Dorsolateral prefrontal cortex (tissue), 120 donors: ENCODE measurements at regions of chr12 and their contacts with region 1.

Region 1: DNA sequence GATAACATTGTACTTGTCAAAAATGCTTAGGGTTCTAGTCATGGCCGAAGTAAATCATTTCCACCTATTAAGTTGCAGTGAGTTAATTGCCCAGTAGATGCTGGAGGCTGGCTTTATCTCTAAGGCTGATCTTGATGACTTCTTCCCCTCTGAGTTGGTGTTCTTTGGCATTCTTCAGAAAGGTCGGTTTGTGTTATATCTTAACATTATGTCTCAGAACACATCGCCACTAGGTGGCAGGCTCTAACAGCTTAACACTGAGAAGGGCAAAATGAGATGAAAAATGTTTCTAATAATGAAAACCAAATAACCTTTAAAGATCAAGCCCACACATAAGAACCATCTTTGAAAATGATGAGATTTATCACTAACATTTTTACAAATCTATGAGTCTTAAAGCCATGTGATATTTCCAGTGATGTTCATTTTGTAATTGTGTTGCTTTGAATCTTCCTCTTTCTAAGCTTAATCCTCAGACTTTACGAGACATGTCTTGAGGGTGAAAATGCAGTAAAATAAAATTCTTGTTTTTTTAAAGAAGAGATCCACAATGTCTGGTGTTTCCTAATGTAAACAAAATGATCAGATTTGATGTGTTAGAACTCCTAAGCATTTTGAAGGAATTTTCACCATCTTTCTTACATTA is 28.6 kb downstream of the SUDS3 start:
- DNase-seq: peak in 6 of 10 donors; percentile 49 to 85 (median 64)
- H3K4me3 ChIP-seq: no peak overlapping the region
- H3K27ac ChIP-seq: peak overlapping the region in 27 of 59 donors; percentile 4 to 73 (median 35)
- H3K27me3 ChIP-seq: no peaks in the 10 kb centered on the region
- CTCF ChIP-seq: peak; percentile 63 to 93 (median 83)

Region 2: GRCh38 chr12:118446244-118446643 is 41.2 kb after region 1 on chr12:
- intact Hi-C with region 1: no loop called
- DNase-seq: no peak
- H3K4me3 ChIP-seq: no peak overlapping the region
- H3K27ac ChIP-seq: no peak overlapping the region
- H3K27me3 ChIP-seq: no peaks in the 10 kb centered on the region
- CTCF ChIP-seq: peak in 5 of 56 donors; percentile 10 to 28 (median 21)

Region 3: DNA sequence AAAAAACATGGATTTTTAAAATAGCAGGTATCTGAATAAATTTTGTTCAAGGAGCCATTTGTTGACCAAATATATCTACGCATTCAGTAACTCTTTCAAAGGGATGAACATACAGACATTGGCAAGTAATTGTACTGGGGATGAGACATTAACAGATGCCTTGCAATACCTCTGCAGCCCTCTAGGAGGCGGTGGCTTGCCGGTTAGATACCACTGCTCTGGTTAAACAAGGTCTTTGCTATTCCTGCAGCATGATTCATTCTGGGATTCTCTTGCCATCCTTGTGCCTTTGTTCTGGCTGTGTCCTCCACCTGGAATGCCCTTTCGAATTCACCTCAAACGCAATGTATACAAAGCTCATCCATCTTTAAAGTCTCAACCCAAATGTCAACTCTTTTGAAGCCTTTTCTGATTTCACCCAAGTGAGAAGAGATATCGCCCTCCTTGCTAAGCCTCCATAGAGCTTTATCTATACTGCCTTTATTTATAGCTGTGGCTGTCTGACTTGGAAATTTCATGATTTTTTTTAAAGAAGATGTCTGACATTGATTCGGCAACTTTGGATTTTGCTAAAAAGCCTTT is 445.3 kb after region 1 on chr12:
- intact Hi-C with region 1: loop called (anchors 10 kb)
- DNase-seq: no peak
- H3K4me3 ChIP-seq: no peak overlapping the region
- H3K27ac ChIP-seq: no peak overlapping the region
- H3K27me3 ChIP-seq: no peaks in the 10 kb centered on the region
- CTCF ChIP-seq: peak in 35 of 56 donors; percentile 5 to 42 (median 25)

Region 4: GRCh38 chr12:119036878-119037825 is 632.2 kb after region 1 on chr12:
- intact Hi-C with region 1: loop called in 1 of 2 experiments (anchors 5 kb)
- DNase-seq: peak in 2 of 10 donors; percentile 34 to 43
- H3K4me3 ChIP-seq: no peak overlapping the region
- H3K27ac ChIP-seq: peak overlapping the region in 27 of 59 donors; percentile 0 to 60 (median 31)
- H3K27me3 ChIP-seq: no peaks in the 10 kb centered on the region
- CTCF ChIP-seq: peak; percentile 41 to 75 (median 62)

Region 5: DNA sequence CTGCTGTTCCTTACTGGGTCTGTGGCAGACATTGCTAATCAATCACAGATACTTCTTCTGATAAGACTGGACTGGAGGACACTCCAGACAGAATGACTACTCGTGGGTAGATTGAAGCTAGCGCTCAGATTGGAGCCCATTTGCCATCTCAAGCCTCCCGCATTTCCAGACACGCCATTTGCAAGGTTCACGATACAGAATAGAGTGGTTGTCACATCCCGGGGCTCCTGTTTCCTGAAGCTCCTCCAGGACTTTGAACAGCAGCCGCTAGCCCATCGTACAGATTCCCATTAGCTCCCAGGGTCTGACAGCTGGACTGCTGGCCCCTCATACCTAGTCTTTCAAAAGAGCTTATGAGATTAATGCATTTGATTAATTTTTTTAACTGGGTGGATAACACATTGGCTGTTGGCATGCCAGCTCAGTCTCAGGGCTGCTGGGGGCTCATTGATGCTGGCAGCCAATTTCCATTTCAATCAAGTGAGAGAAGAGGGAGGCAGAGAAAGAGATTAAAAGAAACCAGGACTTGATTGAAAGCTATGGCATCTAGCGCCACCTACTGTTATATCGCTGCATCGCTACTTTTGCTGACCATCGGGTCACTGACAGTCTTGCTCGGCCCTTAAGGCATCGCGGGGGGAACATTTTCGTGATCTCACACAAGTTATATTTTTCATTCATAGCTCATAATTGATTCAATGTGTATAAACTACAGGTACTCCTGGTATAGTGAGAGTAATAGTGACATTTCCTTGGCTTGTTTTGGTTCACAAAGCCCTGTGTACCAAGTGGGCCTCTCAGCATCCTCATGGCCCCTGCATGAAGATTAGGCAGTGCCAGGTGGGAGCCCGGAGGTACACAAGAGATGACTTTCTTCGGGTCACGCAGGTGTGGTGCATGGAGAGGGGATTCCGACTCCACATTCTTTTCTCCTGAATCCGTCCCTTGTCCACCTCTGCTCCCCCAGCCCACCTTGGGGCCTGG is 1008.1 kb after region 1 on chr12:
- intact Hi-C with region 1: loop called (anchors 5 to 10 kb)
- DNase-seq: peak; percentile 54 to 89 (median 66)
- H3K4me3 ChIP-seq: peak overlapping the region in 36 of 59 donors; percentile 3 to 53 (median 30)
- H3K27ac ChIP-seq: peak overlapping the region in 1 of 59 donors; percentile 26
- H3K27me3 ChIP-seq: no peaks in the 10 kb centered on the region
- CTCF ChIP-seq: peak; percentile 81 to 99 (median 93)